Sigmoid colon (tissue), 7 donors: ENCODE measurements at regions of chr6 and their contacts with region 1.

Region 1: DNA sequence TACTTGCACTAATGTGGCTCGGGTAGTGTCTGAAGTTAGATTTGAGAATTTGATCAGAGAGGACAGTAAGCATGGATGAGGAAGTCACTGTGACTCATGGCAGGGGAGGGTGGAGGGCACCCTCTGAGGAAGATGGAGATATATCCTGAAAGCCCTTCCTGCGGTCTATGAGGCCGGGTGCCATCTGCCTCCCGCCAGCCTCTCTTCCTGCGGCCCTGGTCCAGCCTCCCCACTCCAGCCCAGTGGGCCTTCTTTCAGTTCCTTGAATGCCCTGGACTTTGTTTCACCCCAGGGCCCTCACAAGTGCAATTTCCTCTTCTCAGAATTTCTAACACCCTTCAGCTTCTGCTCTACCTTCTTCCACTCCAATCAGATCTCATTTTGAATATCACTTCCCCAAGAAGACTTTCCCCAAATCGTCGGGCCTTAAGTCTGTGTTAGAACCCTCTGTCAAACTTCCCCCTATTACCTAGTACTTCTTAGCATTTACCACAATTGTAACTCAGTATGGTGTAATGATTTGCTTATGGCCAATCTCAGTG is 20.2 kb upstream of the TNFAIP3 start:
- DNase-seq: peak; percentile 79
- H3K4me3 ChIP-seq: no peak overlapping the region
- H3K27ac ChIP-seq: peak overlapping the region in 2 of 4 donors; percentile 73 to 83
- H3K4me1 ChIP-seq: peaks cover 0 to 41% (median 40%) of the 10 kb centered on the region in 4 donors
- H3K27me3 ChIP-seq: no peaks in the 10 kb centered on the region
- CTCF ChIP-seq: no peak
- EP300 ChIP-seq: no peak
- POLR2A ChIP-seq: no peak

Region 2: DNA sequence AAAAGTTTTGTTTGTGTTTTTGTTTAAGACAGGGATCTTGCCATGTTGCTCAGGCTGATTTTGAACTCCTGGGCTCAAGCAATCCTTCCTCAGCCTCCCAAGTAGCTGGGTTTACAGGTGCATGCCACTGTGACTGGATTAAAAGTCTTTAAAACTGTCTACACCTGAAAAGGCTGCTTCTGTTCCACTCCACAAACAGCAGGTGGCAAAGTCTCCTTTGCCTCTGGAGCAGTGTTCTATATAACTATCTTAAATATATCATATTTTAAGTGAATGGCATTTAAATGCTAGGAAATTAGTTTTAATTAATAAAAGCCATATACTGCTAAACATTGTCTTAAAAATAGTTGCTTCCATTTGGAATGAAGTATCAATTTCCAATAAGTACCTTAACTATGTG is 1468.0 kb before region 1 on chr6:
- intact Hi-C with region 1: no loop called
- DNase-seq: no peak
- H3K4me3 ChIP-seq: no peak overlapping the region
- H3K27ac ChIP-seq: no peak overlapping the region
- H3K4me1 ChIP-seq: no peaks in the 10 kb centered on the region
- H3K27me3 ChIP-seq: no peaks in the 10 kb centered on the region
- CTCF ChIP-seq: no peak
- EP300 ChIP-seq: no peak
- POLR2A ChIP-seq: no peak

Region 3: GRCh38 chr6:137823826-137824555 is 22.9 kb before region 1 on chr6:
- intact Hi-C with region 1: loop called (anchors 2 kb)
- DNase-seq: peak; percentile 93
- H3K4me3 ChIP-seq: no peak overlapping the region
- H3K27ac ChIP-seq: peak overlapping the region; percentile 63 to 76 (median 71)
- H3K4me1 ChIP-seq: peaks cover 0 to 56% (median 38%) of the 10 kb centered on the region in 4 donors
- H3K27me3 ChIP-seq: no peaks in the 10 kb centered on the region
- CTCF ChIP-seq: no peak
- EP300 ChIP-seq: peak; percentile 81 to 98 (median 86)
- POLR2A ChIP-seq: no peak